Right lobe of liver (tissue), 6 donors: ENCODE measurements at regions of chr21 and their contacts with region 1.

Region 1: GRCh38 chr21:36927719-36928117 is 38.8 kb downstream of the HLCS start:
- DNase-seq: peak; percentile 85 to 90 (median 88)
- ATAC-seq: peak; percentile 79 to 89 (median 85)
- H3K4me3 ChIP-seq: no peak overlapping the region
- H3K27ac ChIP-seq: peak overlapping the region in 1 of 3 donors; percentile 57
- H3K4me1 ChIP-seq: peaks cover 0 to 33% (median 13%) of the 10 kb centered on the region in 4 donors
- H3K27me3 ChIP-seq: no peaks in the 10 kb centered on the region
- CTCF ChIP-seq: peak; percentile 82 to 96 (median 96)
- POLR2A ChIP-seq: no peak

Region 2: GRCh38 chr21:36661511-36662309 is 266.0 kb before region 1 on chr21:
- intact Hi-C with region 1: loop called in 1 of 2 experiments (anchors 10 kb)
- DNase-seq: peak in 2 of 3 donors; percentile 49 to 56
- ATAC-seq: peak; percentile 81 to 90 (median 86)
- H3K4me3 ChIP-seq: no peak overlapping the region
- H3K27ac ChIP-seq: no peak overlapping the region
- H3K4me1 ChIP-seq: no peaks in the 10 kb centered on the region
- H3K27me3 ChIP-seq: no peaks in the 10 kb centered on the region
- CTCF ChIP-seq: peak; percentile 35 to 65 (median 54)
- POLR2A ChIP-seq: no peak

Region 3: DNA sequence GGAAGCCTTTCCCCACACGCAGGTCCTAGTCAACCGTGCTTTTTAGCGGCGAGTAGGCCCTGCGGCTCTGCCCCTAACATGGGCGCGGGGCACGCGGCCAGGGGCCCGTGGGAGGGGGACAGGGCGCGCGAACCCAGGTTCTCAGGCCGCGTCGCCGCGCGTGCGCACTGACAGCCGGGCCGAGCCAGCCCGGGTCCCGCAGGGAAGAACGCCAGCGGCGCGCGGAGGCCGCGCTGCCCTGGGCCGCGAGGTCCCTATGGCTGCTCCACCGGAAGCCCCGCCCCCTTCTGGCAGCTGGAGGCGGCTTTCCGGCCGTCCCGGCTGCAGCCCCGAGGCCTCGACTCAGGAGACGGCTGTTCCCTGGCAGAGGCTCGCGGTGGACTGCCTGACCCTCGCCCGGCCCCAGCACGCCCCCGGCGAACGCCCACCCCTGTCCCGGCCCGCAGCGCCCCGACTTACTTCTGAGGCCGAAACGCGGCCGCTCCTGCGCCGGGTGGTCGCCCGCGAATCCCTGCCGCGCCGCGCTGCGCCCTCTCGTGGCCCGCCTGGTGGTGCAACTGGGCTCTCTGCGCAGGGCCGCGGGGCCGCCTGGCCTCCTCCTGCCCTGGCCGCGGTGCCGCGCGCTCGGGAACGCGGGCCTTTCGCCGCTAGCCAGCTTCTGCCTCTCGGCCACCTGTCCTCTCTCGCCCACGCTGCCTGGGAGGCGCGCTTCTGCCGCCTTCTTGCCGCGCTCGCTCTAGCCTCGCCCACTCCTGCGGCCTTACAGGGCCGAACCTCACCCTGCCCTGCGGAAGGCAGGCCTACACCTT is 62.2 kb after region 1 on chr21:
- intact Hi-C with region 1: no loop called
- DNase-seq: peak; percentile 95 to 97 (median 96)
- ATAC-seq: peak; percentile 91 to 96 (median 94)
- H3K4me3 ChIP-seq: peak overlapping the region; percentile 67 to 75 (median 69)
- H3K27ac ChIP-seq: peak overlapping the region; percentile 89 to 92 (median 89)
- H3K4me1 ChIP-seq: peaks cover 0 to 12% (median 4%) of the 10 kb centered on the region in 4 donors
- H3K27me3 ChIP-seq: no peaks in the 10 kb centered on the region
- CTCF ChIP-seq: peak; percentile 94 to 100 (median 98)
- POLR2A ChIP-seq: peak; percentile 86

Region 4: GRCh38 chr21:37032877-37033471 is 105.3 kb after region 1 on chr21:
- intact Hi-C with region 1: no loop called
- DNase-seq: no peak
- ATAC-seq: no peak
- H3K4me3 ChIP-seq: no peak overlapping the region
- H3K27ac ChIP-seq: no peak overlapping the region
- H3K4me1 ChIP-seq: no peaks in the 10 kb centered on the region
- H3K27me3 ChIP-seq: no peaks in the 10 kb centered on the region
- CTCF ChIP-seq: no peak
- POLR2A ChIP-seq: no peak

Region 5: DNA sequence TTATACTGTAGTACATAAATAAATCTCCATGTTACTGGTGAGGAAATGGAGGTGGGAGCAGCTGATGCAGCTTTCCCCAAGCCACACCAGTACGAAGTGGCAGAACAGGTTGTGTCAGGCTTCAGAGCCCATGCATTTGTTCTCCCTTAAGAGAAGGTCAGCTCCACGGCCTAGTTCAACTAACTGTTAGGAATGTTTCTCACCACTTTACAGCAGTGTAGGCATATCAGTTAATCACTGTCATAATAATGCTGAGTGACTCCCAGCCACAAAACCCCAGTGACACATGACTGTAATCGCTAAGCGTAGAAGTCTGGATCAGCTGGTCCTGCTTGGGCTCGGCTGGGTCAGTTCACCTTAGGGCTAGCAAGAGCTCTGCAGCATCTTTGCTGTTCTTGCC is 249.0 kb after region 1 on chr21:
- intact Hi-C with region 1: no loop called
- DNase-seq: no peak
- ATAC-seq: no peak
- H3K4me3 ChIP-seq: no peak overlapping the region
- H3K27ac ChIP-seq: no peak overlapping the region
- H3K4me1 ChIP-seq: no peaks in the 10 kb centered on the region
- H3K27me3 ChIP-seq: no peaks in the 10 kb centered on the region
- CTCF ChIP-seq: no peak
- POLR2A ChIP-seq: no peak